Activated CD4-positive, alpha-beta memory T cell treated with anti-CD3 and anti-CD28 coated beads for 36 hours (primary cell): ENCODE measurements at regions of chr2 and their contacts with region 1.

Region 1: GRCh38 chr2:172710584-172711024 is 25.0 kb upstream of the RAPGEF4 start:
- DNase-seq: peak; percentile 44
- H3K4me3 Mint-ChIP-seq: no peak overlapping the region
- H3K27ac Mint-ChIP-seq: no peak overlapping the region
- H3K4me1 Mint-ChIP-seq: no peaks in the 10 kb centered on the region
- H3K27me3 Mint-ChIP-seq: peaks cover 3% of the 10 kb centered on the region

Region 2: GRCh38 chr2:172588931-172589330 is 121.7 kb before region 1 on chr2:
- CTCF ChIA-PET with region 1: interaction called, 19 read pairs
- POLR2A ChIA-PET with region 1: no interaction called
- intact Hi-C with region 1: loop called (anchors 2 kb)
- DNase-seq: no peak
- H3K4me3 Mint-ChIP-seq: no peak overlapping the region
- H3K27ac Mint-ChIP-seq: no peak overlapping the region
- H3K4me1 Mint-ChIP-seq: peaks cover 27% of the 10 kb centered on the region
- H3K27me3 Mint-ChIP-seq: peaks cover 1% of the 10 kb centered on the region

Region 3: DNA sequence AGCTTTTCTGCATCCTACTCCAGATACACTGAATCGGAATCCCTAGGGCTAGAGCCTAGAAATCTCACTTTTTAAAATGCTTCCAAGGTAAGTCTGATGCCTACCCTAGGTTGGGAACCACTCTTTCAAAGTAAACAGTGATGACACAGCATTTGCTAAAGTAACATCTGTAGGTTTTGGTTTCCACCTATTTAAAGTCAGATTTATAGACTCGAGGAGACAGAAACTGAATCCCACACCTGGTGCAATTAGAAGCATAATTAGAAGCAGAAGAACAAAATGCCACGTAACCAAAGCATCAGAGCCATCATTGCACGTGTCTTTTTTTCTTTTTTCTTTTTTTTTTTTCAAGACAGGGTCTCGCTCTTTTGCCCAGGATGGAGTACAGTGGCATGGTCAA is 113.8 kb before region 1 on chr2:
- CTCF ChIA-PET with region 1: interaction called, 19 read pairs
- POLR2A ChIA-PET with region 1: no interaction called
- intact Hi-C with region 1: loop called (anchors 2 kb)
- DNase-seq: no peak
- H3K4me3 Mint-ChIP-seq: no peak overlapping the region
- H3K27ac Mint-ChIP-seq: no peak overlapping the region
- H3K4me1 Mint-ChIP-seq: peaks cover 1% of the 10 kb centered on the region
- H3K27me3 Mint-ChIP-seq: no peaks in the 10 kb centered on the region

Region 4: DNA sequence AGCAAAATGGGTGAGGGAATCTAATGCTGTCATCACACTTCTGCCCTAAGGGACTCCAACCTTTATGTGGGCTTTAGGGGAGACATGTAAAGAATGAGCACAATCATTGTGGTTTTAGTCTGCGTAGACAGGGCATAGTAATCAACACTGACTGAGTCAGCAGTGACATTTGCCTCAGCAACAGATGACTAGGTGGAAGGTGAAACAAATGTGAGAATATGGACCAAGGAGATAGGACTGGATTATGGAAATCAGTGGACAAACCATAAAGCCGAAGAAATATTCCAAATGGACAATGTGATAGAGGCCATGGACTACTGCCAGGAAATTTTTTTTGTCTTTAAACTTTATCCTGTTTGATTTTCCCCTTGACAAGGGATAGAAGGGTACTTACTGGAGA is 70.8 kb before region 1 on chr2:
- CTCF ChIA-PET with region 1: no interaction called
- POLR2A ChIA-PET with region 1: no interaction called
- intact Hi-C with region 1: no loop called
- DNase-seq: peak; percentile 10
- H3K4me3 Mint-ChIP-seq: no peak overlapping the region
- H3K27ac Mint-ChIP-seq: no peak overlapping the region
- H3K4me1 Mint-ChIP-seq: peaks cover 4% of the 10 kb centered on the region
- H3K27me3 Mint-ChIP-seq: peaks cover 5% of the 10 kb centered on the region

Region 5: DNA sequence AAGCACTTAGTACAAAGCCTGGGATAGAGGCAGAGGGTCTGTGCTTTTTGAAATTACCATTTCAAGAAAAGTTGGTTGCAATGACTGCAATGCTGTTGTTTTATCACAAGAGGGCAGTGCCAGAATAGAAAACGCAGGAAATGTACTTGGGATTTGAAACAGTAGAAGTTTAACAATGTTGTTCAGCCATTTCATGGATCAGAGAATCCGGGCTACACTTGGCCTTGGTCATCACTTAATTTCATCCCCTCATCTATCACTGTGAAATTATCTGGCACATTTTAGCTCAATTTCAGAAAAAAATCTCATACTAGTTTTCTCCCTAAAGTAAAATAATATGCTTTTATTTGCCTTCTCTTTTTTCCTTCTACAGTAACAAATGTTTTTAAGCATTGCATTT is 95.9 kb after region 1 on chr2:
- CTCF ChIA-PET with region 1: no interaction called
- POLR2A ChIA-PET with region 1: no interaction called
- intact Hi-C with region 1: no loop called
- DNase-seq: no peak
- H3K4me3 Mint-ChIP-seq: no peak overlapping the region
- H3K27ac Mint-ChIP-seq: no peak overlapping the region
- H3K4me1 Mint-ChIP-seq: no peaks in the 10 kb centered on the region
- H3K27me3 Mint-ChIP-seq: peaks cover 5% of the 10 kb centered on the region

Region 6: DNA sequence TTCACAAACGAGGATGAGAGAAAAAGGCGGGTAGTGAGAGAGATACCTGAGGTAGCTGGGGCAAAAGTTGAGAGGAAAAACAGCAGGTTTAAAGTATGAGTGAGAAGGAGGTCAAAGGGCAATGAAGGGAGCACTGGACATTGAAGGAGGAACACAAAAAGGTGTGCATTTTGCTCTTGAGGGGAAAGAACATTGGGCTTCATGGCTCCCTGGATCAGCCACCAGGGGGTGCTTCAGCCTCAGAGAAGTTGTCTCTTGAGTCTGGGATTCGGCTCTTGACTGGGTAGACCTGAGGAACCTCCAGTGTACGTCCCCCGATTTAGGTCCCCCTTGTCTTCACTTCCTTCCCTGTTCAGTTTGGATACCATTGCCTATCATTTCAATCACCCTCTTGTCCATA is 153.6 kb after region 1 on chr2:
- CTCF ChIA-PET with region 1: no interaction called
- POLR2A ChIA-PET with region 1: no interaction called
- intact Hi-C with region 1: no loop called
- DNase-seq: peak; percentile 55
- H3K4me3 Mint-ChIP-seq: no peak overlapping the region
- H3K27ac Mint-ChIP-seq: no peak overlapping the region
- H3K4me1 Mint-ChIP-seq: no peaks in the 10 kb centered on the region
- H3K27me3 Mint-ChIP-seq: peaks cover 21% of the 10 kb centered on the region